ENCODE measurements at regions of chr9 and their contacts with region 1.

Region 1: GRCh38 chr9:33676746-33677505 is 118.4 kb upstream of the PRSS3 start:
- DNase-seq: peak; percentile 72
- ATAC-seq: peak; percentile 87
- H3K4me3 Mint-ChIP-seq: peak overlapping the region; percentile 91
- H3K27ac Mint-ChIP-seq: peak overlapping the region; percentile 94
- H3K4me1 Mint-ChIP-seq: peaks cover 19% of the 10 kb centered on the region
- H3K27me3 Mint-ChIP-seq: peaks cover 6% of the 10 kb centered on the region; the same call in 1 of the 2 replicates
- CTCF ChIP-seq: no peak

Region 2: DNA sequence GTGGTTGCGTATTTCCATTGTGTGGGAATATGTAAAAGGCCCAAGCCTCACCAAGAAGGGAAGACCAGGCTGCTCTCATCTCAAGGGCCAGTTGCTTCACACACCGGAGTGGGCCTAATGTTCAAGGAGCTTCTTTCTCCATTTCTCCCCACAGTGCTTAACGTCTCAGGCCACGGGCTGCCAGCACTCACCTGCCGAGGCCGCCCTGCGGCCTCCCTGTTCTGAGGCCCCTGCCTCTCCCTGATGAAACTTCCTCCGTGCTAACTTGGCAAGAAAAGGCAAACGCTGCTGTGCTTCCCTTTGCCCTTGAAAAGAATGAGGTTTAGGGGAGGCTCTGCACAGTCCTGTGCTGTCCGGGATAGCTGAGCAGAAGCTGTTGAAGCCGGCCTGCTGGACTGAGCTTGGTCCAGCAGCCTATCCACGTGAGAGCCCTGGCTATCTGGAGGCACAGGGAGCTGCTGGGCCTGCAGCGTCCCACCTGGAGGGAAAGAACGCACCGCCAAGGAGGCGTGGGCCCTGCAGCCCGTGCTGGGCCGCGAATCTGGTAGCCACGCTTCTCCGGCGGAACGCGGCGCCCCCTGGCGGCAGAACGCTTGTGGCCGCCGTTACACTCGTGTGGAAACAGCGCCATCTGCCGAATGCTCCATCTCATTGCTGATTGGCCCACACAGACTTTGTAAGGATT is 44.9 kb after region 1 on chr9:
- CTCF ChIA-PET with region 1: interaction called, 11 read pairs
- POLR2A ChIA-PET with region 1: no interaction called
- DNase-seq: peak; percentile 92
- ATAC-seq: peak; percentile 78
- H3K4me3 Mint-ChIP-seq: no peak overlapping the region; the same call in 1 of the 2 replicates
- H3K27ac Mint-ChIP-seq: no peak overlapping the region
- H3K4me1 Mint-ChIP-seq: peaks cover 2% of the 10 kb centered on the region
- H3K27me3 Mint-ChIP-seq: peaks cover 24% of the 10 kb centered on the region
- CTCF ChIP-seq: peak; percentile 100

Measured in WTC11 (cell line).